ENCODE measurements at regions of chr11 and their contacts with region 1.

Region 1: GRCh38 chr11:75204685-75205563 is 35.6 kb upstream of the TPBGL start:
- DNase-seq: peak; percentile 69 to 87 (median 79)
- H3K4me3 ChIP-seq: no peak overlapping the region
- H3K27ac ChIP-seq: no peak overlapping the region
- H3K4me1 ChIP-seq: no peaks in the 10 kb centered on the region
- H3K27me3 ChIP-seq: peaks cover 0 to 25% (median 10%) of the 10 kb centered on the region in 5 experiments

Region 2: GRCh38 chr11:75150879-75151278 is 54.0 kb before region 1 on chr11 and contains the start of gene SLCO2B1:
- CTCF ChIA-PET with region 1: interaction called, 309 read pairs
- POLR2A ChIA-PET with region 1: no interaction called
- DNase-seq: no peak
- H3K4me3 ChIP-seq: no peak within 1 kb of the TSS
- H3K27ac ChIP-seq: no peak within 1 kb of the TSS
- H3K4me1 ChIP-seq: peaks cover 0 to 10% (median 5%) of the 10 kb centered on the region in 4 experiments
- H3K27me3 ChIP-seq: peaks cover 0 to 4% (median 0%) of the 10 kb centered on the region in 5 experiments

Measured in common myeloid progenitor, CD34-positive (primary cell).